Activated CD4-positive, alpha-beta memory T cell treated with anti-CD3 and anti-CD28 coated beads for 36 hours (primary cell): ENCODE measurements at regions of chr12 and their contacts with region 1.

Region 1: DNA sequence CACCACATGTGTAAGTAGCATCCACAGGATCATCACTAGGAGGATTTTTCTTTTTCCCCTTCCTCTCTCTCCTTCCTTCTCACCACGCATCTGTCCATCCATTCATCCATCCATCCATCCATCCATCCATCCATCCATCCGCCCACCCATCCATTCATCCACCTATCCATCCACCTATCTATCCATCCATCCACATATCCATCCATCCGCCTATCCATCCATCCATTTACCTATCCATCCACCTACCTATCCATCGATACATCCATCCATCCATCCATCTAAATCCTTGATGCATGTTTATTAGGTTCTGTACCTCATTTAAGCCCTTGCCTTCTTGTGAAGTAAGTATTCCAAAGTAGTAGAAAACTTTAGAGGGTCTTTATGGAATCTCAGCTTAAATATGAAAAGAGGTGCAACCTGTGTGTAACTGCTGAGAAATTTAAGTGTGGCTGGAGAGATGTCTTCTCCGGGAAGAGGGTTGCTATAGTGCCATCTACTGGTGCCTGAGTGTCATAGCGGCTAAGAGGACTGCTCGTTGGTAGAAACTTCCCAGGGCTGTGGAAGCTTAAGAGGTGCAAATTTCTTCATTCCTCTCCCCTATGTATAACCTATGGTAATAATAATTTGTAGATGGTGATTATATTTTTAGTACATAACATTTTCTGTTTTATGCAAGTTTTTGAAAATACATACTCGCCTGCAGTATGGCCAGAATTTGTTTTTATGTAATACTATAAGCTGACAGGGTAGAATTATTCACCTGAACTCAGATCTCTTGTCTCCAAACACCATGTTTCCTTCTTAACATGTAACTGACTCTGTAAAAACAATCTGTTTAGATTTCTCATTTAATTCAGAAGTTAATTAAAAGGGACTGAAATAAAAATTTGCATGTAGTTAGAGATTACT is 46.0 kb downstream of the MYO1H start:
- DNase-seq: peak; percentile 45
- H3K4me3 Mint-ChIP-seq: no peak overlapping the region
- H3K27ac Mint-ChIP-seq: no peak overlapping the region
- H3K4me1 Mint-ChIP-seq: no peaks in the 10 kb centered on the region
- H3K27me3 Mint-ChIP-seq: peaks cover 19% of the 10 kb centered on the region

Region 2: GRCh38 chr12:109110988-109111495 is 282.6 kb before region 1 on chr12:
- CTCF ChIA-PET with region 1: interaction called, 11 read pairs
- POLR2A ChIA-PET with region 1: no interaction called
- intact Hi-C with region 1: loop called (anchors 5 kb)
- DNase-seq: peak; percentile 67
- H3K4me3 Mint-ChIP-seq: peak overlapping the region; percentile 64
- H3K27ac Mint-ChIP-seq: peak overlapping the region; percentile 40
- H3K4me1 Mint-ChIP-seq: peaks cover 14% of the 10 kb centered on the region
- H3K27me3 Mint-ChIP-seq: no peaks in the 10 kb centered on the region

Region 3: DNA sequence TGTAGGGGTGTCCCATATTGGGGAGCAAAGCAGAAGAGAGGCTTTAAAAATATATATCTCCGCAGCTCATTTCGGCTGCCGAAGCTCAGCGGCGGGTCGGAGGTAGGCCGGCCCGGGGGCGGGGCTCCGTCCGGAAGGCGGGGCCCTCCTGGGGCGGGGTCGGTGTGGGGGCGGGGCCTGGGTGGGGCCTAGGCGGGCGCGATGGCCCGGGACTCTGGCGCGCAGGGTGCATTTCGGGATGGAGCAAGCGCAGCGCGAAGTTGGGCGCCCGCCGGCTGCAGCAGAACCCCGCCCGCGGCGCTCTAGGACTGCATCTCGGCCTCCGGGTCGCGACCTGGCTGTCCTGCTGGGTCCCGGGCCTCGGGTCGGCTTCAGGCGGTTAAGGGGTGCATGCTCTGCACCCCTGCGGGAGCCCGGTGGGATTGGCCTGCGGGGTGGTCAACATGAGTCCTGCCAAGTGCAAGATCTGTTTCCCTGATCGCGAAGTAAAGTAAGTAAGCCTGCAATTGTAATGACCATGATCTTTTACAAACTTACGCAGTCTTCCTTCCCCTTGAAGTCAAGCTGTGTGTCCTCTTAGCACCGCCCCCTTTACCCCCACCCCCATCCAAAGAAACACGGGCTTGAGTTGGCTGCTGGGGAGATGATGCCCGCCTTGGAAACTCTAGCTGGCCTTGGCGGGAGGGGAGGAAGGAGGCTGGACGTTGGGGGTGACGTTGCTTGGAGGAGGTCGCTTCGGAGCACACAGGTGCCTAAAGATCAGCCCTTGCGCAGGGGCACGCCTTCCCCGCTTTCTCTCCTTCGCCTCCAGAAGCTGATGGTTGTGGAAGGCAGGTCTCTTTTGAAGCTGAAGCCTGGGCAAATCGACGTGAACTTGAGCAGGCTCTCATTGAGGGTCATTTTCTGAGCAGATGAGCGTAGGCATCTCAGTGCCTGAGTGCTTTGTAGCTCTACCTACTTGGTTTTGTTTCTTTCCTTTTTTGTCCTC is 238.9 kb before region 1 on chr12:
- CTCF ChIA-PET with region 1: interaction called, 14 read pairs
- POLR2A ChIA-PET with region 1: no interaction called
- intact Hi-C with region 1: no loop called
- DNase-seq: peak; percentile 89
- H3K4me3 Mint-ChIP-seq: peak overlapping the region; percentile 84
- H3K27ac Mint-ChIP-seq: peak overlapping the region; percentile 80
- H3K4me1 Mint-ChIP-seq: peaks cover 14% of the 10 kb centered on the region
- H3K27me3 Mint-ChIP-seq: no peaks in the 10 kb centered on the region

Region 4: DNA sequence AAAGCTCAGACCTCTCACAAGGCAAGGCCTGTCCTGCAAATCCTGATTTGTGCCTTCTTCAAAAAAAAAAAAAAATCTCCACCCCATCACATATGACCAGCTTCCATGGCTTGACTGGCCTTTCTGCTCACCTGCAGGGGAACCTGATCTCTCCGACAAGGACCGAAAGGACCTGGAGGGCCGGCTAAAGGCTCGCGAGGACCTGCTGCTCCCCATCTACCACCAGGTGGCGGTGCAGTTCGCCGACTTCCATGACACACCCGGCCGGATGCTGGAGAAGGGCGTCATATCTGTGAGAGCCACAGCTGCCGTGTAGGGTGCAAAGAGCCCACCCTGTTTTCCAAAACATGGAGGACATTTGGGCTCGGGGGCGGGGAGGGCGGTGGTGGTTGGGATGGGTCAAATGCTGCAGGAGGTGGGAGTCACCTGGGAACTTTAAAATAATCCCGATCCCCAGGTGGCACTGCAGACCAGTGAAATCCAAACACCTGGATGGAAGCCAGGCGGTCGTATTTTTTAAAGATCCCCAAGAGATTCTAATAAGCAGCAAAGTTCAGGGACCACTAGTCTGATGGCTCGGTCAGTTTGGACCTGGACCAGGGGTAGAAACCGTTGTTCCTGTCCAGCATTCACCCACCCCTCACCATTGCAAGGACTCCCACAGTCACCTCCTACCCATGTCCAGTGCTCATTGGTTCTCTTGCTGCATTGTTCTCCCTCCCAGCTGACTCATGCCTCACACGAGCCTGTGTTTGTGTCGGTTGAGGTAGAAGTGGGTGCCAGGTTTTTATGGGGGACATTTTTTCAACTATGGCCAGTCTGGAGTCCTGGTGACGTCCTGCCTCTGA is 129.4 kb before region 1 on chr12:
- CTCF ChIA-PET with region 1: interaction called, 31 read pairs
- POLR2A ChIA-PET with region 1: no interaction called
- intact Hi-C with region 1: loop called (anchors 2 kb)
- DNase-seq: peak; percentile 73
- H3K4me3 Mint-ChIP-seq: no peak overlapping the region
- H3K27ac Mint-ChIP-seq: no peak overlapping the region
- H3K4me1 Mint-ChIP-seq: no peaks in the 10 kb centered on the region
- H3K27me3 Mint-ChIP-seq: no peaks in the 10 kb centered on the region

Region 5: GRCh38 chr12:109356577-109356976 is 37.1 kb before region 1 on chr12:
- CTCF ChIA-PET with region 1: no interaction called
- POLR2A ChIA-PET with region 1: no interaction called
- intact Hi-C with region 1: no loop called
- DNase-seq: no peak
- H3K4me3 Mint-ChIP-seq: no peak overlapping the region
- H3K27ac Mint-ChIP-seq: no peak overlapping the region
- H3K4me1 Mint-ChIP-seq: peaks cover 14% of the 10 kb centered on the region
- H3K27me3 Mint-ChIP-seq: peaks cover 14% of the 10 kb centered on the region

Region 6: DNA sequence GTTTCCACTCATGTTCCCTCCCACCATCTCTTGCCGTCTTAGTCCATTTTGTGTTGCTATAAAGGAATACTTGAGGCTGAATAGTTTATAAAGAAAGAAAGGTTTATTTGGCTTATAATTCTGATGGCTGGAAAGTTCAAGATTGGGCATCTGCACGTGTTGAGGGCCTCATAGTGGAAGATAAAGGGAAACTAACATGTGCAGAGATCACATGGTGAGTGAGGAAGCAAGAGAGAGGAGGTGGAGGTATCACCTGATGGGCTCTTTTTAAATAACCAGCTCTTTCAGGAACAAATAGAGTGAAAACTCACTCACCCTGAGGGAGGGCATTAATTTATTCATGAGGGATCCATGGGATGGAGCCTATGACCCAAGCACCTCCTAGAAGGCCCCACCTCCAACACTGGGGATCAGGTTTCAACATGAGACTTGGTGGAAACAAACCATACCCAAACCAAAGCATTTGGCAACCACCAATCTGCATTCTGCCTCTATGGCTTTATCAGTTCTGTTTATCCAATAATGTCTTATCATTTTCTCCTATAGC is 16.5 kb before region 1 on chr12:
- CTCF ChIA-PET with region 1: interaction called, 10 read pairs
- POLR2A ChIA-PET with region 1: no interaction called
- intact Hi-C with region 1: no loop called
- DNase-seq: no peak
- H3K4me3 Mint-ChIP-seq: no peak overlapping the region
- H3K27ac Mint-ChIP-seq: no peak overlapping the region
- H3K4me1 Mint-ChIP-seq: no peaks in the 10 kb centered on the region
- H3K27me3 Mint-ChIP-seq: peaks cover 18% of the 10 kb centered on the region

Region 7: GRCh38 chr12:109440851-109441493 is 47.3 kb after region 1 on chr12:
- CTCF ChIA-PET with region 1: no interaction called
- POLR2A ChIA-PET with region 1: no interaction called
- intact Hi-C with region 1: no loop called
- DNase-seq: no peak
- H3K4me3 Mint-ChIP-seq: no peak overlapping the region
- H3K27ac Mint-ChIP-seq: no peak overlapping the region
- H3K4me1 Mint-ChIP-seq: no peaks in the 10 kb centered on the region
- H3K27me3 Mint-ChIP-seq: no peaks in the 10 kb centered on the region

Region 8: DNA sequence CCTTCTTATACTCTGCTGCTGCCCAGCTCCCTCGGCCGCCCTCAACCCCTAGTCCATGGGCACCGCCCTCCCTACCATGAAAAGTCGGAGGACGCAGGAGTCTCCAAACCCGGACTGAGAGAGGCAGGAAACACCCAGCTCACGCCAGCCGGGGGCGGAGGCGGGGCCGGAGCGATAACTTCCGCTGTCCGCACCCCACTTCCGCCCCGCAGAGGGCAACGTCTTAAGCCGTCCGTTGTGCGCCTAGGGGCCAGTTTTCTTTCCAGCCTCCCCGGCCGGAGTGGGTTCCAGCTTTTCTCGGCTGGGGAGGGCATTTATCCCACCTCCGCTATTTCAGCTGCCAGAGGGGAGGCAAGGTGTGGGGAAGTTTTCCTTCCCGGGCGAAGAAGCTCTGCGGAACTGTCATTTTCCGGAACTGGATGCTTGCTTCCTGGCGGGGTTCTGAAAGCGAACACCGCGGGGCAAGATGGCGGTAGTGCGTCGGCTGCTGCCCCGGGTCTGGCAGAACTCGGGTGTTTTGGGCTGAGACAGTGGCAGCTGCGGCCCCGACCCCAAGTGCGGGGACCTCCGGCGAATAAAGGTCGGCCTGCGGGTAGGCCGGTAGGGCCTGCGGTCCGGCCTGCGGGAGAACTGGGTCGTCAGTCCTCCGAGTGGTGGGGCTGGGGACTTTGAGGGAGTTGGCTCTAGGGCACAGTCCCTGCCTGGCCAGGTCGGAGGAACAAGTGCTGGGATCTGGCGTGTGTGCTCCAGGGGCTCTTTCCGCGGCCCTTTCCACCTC is 83.7 kb after region 1 on chr12 and contains the starts of genes KCTD10 and UBE3B:
- CTCF ChIA-PET with region 1: no interaction called
- POLR2A ChIA-PET with region 1: no interaction called
- intact Hi-C with region 1: no loop called
- DNase-seq: peak; percentile 90
- H3K4me3 Mint-ChIP-seq: peak within 1 kb of the TSS; percentile 91
- H3K27ac Mint-ChIP-seq: peak within 1 kb of the TSS; percentile 98
- H3K4me1 Mint-ChIP-seq: peaks cover 35% of the 10 kb centered on the region
- H3K27me3 Mint-ChIP-seq: no peaks in the 10 kb centered on the region
- total RNA-seq, gene KCTD10: 36.2 to 40.3 TPM
- total RNA-seq, gene UBE3B: 29.8 to 32.3 TPM